Heart right ventricle (tissue), 16 donors: ENCODE measurements at regions of chr1 and their contacts with region 1.

Region 1: DNA sequence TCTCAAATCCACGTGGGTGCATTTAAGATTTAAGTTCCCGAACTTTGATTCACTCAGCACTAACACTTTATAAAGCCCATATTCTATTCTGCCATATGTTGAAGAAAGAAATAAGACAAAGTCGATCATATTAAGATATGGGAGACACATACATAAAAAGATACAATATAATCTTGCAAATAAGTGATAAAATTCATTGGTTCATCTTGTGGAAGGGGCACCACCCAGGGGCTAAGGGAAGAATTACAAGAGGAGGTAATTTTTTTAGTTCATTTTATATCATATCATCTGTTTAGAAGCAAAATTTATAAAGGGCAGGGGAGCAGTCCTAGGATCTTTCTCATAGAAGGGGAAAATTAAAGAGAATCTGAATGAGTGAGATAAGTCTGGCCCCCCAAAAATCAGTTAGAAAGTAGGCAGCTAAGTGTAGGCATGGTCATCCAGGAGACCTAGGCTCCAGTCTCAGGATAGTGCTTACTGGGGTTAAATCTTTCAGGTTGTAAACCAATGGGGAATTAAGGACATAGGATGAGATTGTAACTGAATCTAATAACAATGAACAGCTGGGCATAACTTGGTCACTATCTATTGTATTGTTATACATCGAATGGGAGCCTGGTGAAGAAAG is 124.2 kb upstream of the L1TD1 start:
- DNase-seq: no peak
- ATAC-seq: no peak
- H3K4me3 ChIP-seq: no peak overlapping the region
- H3K27ac ChIP-seq: peak overlapping the region; percentile 60 to 92 (median 89)
- H3K4me1 ChIP-seq: peaks cover 0 to 52% (median 25%) of the 10 kb centered on the region in 9 donors
- H3K27me3 ChIP-seq: no peaks in the 10 kb centered on the region
- CTCF ChIP-seq: peak; percentile 31 to 69 (median 60)

Region 2: DNA sequence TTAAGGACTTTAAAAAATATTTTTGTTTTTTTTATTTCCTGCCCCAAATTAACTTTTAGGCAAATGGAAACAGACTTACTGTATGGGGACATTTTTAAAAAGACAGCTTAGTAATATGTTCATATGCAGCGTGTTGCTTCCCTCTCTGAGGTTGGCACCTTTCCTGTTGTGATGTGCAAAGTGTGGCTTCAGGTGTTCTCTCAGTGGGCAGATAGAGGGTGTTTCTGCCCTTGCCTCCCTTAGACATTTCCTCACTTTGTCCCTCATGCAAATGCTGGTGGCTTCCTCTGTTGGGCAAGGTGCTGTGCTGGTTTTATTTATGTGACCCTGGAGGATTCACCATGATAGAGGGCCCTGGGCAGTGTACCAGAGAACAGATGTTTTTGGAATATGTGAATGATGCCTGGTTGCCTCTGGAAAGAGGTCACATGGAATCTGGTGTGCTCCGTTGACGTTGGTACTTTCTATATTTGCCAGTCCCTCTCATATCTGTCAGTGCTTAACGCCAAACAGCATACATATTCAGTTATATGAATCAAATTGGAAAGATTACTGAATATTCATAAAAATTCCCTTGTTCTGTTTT is 204.8 kb before region 1 on chr1:
- intact Hi-C with region 1: loop called in 3 of 10 experiments (anchors 1 to 10 kb)
- DNase-seq: peak in 1 of 2 donors; percentile 14
- ATAC-seq: peak; percentile 16 to 92 (median 74)
- H3K4me3 ChIP-seq: no peak overlapping the region
- H3K27ac ChIP-seq: peak overlapping the region in 7 of 10 donors; percentile 1 to 44 (median 30)
- H3K4me1 ChIP-seq: peaks cover 0 to 13% (median 0%) of the 10 kb centered on the region in 9 donors
- H3K27me3 ChIP-seq: no peaks in the 10 kb centered on the region
- CTCF ChIP-seq: no peak

Region 3: GRCh38 chr1:61950418-61950817 is 120.1 kb before region 1 on chr1:
- intact Hi-C with region 1: loop called (anchors 2 to 10 kb)
- DNase-seq: no peak
- ATAC-seq: no peak
- H3K4me3 ChIP-seq: no peak overlapping the region
- H3K27ac ChIP-seq: peak overlapping the region in 5 of 10 donors; percentile 73 to 86 (median 80)
- H3K4me1 ChIP-seq: peaks cover 0 to 13% (median 0%) of the 10 kb centered on the region in 9 donors
- H3K27me3 ChIP-seq: no peaks in the 10 kb centered on the region
- CTCF ChIP-seq: peak in 8 of 9 donors; percentile 11 to 52 (median 36)

Region 4: GRCh38 chr1:61973100-61973837 is 97.2 kb before region 1 on chr1:
- intact Hi-C with region 1: loop called in 1 of 10 experiments (anchors 10 kb)
- DNase-seq: no peak
- ATAC-seq: peak in 5 of 8 donors; percentile 65 to 82 (median 77)
- H3K4me3 ChIP-seq: no peak overlapping the region
- H3K27ac ChIP-seq: peak overlapping the region in 7 of 10 donors; percentile 0 to 56 (median 41)
- H3K4me1 ChIP-seq: peaks cover 0 to 17% (median 0%) of the 10 kb centered on the region in 9 donors
- H3K27me3 ChIP-seq: no peaks in the 10 kb centered on the region
- CTCF ChIP-seq: no peak

Region 5: GRCh38 chr1:62082456-62083363 is 12.2 kb after region 1 on chr1:
- intact Hi-C with region 1: no loop called
- DNase-seq: peak in 1 of 2 donors; percentile 15
- ATAC-seq: peak in 3 of 8 donors; percentile 39 to 68 (median 58)
- H3K4me3 ChIP-seq: no peak overlapping the region
- H3K27ac ChIP-seq: no peak overlapping the region
- H3K4me1 ChIP-seq: peaks cover 0 to 15% (median 6%) of the 10 kb centered on the region in 9 donors
- H3K27me3 ChIP-seq: no peaks in the 10 kb centered on the region
- CTCF ChIP-seq: peak; percentile 66 to 93 (median 89)